Head of caudate nucleus (tissue), 42 donors: ENCODE measurements at regions of chr3 and their contacts with region 1.

Region 1: DNA sequence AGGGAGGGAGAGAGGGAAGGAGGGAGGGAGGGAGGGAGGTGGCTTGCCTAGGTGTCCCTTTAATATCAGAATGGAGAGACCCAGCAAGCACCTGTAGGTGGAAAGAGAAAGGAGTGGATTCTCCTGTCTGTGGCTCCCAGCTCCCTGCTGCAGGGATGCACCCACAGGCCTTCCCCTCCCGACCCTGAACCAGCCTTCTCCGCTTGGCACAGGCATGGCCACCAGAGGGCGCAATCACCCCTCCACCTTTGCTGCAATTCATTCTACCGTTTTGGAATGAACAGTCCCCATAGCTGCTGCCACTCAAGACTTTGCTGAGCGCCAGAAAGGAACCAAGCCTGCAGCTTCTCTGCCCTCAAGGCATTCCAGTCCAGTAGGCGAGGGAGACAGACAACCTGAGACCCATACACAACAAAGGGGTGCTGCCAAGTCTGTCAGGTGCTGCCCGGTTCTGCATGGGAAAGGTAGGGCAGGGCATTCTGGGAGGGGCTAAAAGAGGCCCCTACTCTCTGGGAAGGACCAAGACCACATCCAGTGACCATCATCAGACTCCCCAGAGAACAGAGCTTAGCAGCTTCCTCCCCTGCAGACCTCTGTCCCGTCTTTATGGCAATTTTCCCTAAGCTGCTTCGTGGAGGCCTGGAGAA is 4.9 kb downstream of the TLR9 start:
- DNase-seq: peak; percentile 77 to 94 (median 90)

Region 2: DNA sequence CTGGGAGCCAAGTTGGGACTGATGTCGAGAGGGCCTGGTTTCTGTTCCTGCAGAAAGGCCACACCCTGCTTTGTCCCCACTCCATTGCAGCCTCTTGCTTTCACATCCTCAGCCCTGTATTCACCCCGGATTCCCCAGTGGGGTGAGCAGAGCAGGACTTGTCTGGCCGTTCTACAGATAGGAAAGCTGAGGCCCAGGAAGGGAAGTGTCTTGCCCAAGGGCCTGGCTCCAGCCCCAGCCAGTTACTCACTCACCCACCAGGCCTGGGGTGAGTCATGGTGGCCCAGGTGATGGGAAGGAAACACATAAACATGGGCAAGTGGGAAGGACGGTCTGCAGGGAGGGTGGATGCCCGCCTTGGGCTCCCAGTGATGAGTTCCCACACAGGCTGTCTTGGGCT is 158.0 kb before region 1 on chr3:
- intact Hi-C with region 1: no loop called
- DNase-seq: peak in 5 of 42 donors; percentile 12 to 45 (median 27)

Region 3: GRCh38 chr3:52339612-52340011 is 119.1 kb after region 1 on chr3:
- intact Hi-C with region 1: loop called (anchors 5 kb)
- DNase-seq: peak in 20 of 42 donors; percentile 4 to 65 (median 38)